Left cardiac atrium (tissue), 4 donors: ENCODE measurements at regions of chr3 and their contacts with region 1.

Region 1: DNA sequence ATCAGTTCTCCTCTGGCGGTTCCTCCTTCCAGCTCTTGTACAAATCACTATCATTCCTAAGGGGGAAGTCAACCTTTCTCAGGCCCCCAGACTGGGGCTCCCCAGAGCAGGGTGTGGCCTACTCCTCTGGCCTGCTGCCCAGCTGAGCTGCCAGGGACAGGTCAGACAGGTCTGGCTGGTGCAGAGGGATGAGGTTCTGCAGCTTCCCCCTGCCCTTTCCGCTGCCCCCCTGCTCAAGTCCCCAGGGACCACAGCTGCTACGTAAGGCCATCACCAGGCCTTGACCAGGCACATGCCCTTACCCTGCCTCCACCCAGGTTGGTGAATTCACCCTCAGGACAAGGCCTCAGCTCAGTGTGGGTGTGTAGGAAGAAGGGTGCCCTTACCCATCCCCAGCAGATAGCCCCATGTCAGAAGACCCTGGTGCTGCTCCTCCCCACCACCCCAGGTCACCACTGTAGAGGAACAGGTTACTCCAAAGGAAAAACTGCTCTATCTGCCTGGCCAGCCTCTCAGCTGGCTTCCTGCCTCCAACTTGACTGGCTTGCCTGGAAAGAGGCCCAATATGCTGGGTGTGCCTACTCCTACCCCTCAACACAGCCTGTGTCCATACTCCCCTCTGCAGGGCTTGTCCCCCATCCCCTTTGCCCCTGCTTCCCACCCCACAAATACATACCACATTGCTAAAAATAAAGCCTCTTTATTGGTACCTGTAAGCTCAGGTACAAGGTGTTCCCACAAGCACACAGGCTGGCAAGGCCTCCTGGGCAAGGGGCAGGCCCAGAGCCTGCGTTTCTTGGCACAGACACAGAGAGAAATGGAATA is 12.0 kb downstream of the CSRNP1 start:
- DNase-seq: peak; percentile 78
- ATAC-seq: peak; percentile 25 to 46

Region 2: DNA sequence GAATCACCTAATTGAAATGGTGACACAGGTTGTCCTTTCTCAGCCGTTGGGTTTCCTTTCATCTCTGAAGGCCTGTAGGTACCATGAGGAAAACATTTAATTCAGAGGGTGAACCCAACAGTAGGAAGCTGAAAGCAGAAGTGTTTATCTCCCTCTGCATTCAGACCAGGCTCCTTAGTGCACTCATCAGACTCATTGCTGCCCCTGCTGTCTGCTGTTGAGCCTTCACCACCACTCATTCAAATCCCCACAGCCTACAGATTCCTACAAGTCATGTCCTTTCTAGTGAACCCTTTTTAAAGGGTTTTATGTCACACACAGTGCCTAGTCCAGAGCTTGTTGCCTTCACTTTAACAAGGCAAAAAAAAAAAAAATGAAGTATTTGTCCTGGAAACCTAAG is 76.2 kb before region 1 on chr3:
- intact Hi-C with region 1: no loop called
- DNase-seq: no peak
- ATAC-seq: peak in 1 of 2 donors; percentile 31

Region 3: DNA sequence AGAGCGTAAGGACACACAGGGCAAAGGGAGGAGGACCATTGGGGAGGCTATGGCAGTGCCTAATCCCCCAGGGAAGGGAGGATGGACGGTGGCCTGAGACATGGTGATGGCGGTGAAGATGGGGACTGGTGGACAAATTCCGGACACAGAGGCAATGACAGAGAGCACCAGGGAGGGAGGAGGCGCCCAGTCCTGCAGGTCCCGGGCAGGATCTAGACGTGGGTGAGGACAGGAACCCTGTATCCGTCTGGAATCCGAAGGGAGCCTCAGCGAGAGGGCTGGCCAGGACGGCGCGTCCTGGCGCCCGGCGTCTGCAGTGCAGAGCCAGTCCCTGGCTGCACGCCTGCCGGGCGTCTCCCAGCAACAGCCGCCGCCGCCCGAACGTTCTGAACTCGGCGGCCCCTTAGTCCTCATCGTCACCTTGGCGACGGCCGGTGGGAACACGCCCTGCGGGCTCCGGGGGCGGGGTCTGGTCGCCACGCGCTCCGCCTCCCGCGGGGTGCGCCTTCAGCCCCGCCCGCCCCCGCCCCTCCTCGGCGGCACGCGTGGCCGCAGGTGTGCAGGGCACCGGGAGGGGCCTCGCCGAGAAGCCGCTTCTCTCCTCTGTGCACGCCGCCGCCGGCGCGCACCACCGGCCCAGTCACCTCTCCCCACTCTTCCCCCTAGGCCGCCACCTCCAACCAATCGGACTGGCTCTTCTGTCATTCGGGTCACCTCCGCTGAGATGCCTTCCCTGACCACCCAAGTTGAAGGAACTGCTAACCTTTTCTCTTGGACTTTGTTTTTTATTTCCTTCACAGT is 39.4 kb after region 1 on chr3:
- intact Hi-C with region 1: loop called in 1 of 2 experiments (anchors 5 kb)
- DNase-seq: peak; percentile 97
- ATAC-seq: peak; percentile 84 to 87

Region 4: DNA sequence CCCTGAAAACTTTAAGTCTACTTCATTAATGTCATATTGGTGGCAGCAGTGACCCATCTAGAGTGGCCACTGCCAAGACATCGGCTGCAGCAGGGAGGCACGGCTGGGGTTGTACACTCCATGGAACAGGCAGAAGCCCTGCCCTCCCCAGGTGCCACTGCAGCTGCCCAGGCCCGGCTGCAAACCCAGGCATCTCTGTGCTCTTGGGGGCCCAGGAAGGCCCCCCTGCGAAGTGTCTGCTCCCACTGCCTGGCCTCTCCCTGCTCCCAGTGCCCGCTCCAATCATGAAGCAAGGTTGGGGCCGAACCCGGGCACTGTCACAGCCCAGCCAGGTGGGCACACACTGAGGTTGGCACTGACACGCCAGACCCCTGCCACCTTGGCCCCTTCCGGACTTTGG is 1303.7 kb after region 1 on chr3:
- intact Hi-C with region 1: no loop called
- DNase-seq: no peak
- ATAC-seq: no peak